Gastrocnemius medialis (tissue), 4 donors: ENCODE measurements at regions of chr6 and their contacts with region 1.

Region 1: DNA sequence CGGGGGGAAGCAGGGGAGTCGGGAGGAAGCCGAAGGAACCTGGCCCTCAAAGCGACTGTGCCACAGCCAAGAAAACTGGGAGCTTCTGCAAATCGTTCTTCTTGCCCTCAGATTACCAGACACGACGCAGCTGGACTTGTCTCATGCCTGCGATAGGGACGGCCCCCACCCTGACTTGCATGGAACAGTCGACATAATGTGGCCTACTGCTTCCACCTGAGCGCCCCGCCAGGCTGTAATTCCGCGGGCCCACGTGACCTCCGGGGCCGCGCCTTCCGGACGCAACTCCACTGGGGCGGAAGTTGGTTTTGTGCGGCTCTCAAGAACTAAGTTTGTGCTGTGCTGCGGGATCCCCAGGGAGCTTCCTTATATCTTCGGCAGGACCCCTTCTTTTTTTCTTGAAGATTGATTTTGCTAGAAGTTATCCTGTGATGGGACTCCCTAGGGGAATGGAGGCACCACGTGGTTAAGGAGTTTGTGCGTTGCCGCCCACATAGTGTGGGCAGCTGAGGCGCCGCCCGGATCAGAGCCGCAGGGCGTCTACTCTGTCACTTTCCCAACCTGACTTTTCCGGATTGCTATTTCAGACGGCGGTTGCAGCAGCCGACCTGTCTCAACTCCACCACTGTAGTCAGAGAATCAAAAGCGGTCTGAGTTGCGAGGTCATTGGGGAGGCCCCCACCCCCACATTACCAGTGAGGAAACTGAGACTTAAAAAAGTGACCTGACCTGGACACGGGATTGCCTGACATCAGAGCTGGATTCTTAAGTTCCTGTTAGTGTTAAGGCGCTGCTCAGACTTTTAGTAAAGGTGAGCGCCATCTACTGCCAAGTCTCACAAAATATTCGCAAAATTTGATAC is 540 bp upstream of the CD164 start:
- DNase-seq: peak; percentile 90 to 91
- ATAC-seq: peak; percentile 82 to 84
- H3K4me3 ChIP-seq: peak overlapping the region; percentile 87 to 100 (median 98)
- H3K27ac ChIP-seq: peak overlapping the region; percentile 96 to 100 (median 99)
- H3K4me1 ChIP-seq: peaks cover 42 to 43% of the 10 kb centered on the region in 2 donors
- H3K27me3 ChIP-seq: no peaks in the 10 kb centered on the region
- CTCF ChIP-seq: peak; percentile 51 to 64 (median 55)
- POLR2A ChIP-seq: peak; percentile 50 to 75

Region 2: GRCh38 chr6:109002051-109002697 is 380.6 kb before region 1 on chr6:
- in situ Hi-C with region 1: no loop called
- intact Hi-C with region 1: loop called (anchors 5 kb)
- DNase-seq: peak; percentile 58 to 75
- ATAC-seq: peak; percentile 93 to 96
- H3K4me3 ChIP-seq: peak overlapping the region in 3 of 4 donors; percentile 23 to 35 (median 33)
- H3K27ac ChIP-seq: peak overlapping the region; percentile 92 to 98 (median 95)
- H3K4me1 ChIP-seq: peaks cover 87 to 92% of the 10 kb centered on the region in 2 donors
- H3K27me3 ChIP-seq: no peaks in the 10 kb centered on the region
- CTCF ChIP-seq: no peak
- POLR2A ChIP-seq: peak in 1 of 2 donors; percentile 43

Region 3: DNA sequence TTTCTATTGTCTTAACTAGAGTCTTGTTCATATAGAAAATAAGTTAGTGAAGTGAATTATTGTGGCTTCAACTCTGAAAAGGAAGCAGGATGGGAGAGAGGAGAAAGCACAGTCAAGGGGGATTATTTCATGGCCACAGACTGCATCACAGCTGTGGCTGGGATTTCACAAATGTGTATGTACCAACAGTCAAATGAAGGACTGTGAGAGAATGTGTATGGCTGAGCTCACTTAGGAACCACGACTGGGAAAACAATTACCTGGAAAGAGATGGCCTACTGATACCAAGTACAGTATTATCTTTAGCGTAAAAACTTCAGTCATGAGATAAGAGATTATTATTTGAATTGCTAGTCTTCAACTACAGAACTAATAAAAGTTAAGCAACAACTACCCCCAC is 343.0 kb before region 1 on chr6:
- in situ Hi-C with region 1: no loop called
- intact Hi-C with region 1: no loop called
- DNase-seq: no peak
- ATAC-seq: peak; percentile 68 to 87
- H3K4me3 ChIP-seq: no peak overlapping the region
- H3K27ac ChIP-seq: peak overlapping the region in 3 of 4 donors; percentile 13 to 70 (median 68)
- H3K4me1 ChIP-seq: peaks cover 65 to 83% of the 10 kb centered on the region in 2 donors
- H3K27me3 ChIP-seq: no peaks in the 10 kb centered on the region
- CTCF ChIP-seq: no peak
- POLR2A ChIP-seq: no peak

Region 4: GRCh38 chr6:109187399-109188114 is 195.2 kb before region 1 on chr6:
- in situ Hi-C with region 1: loop called (anchors 5 to 10 kb)
- intact Hi-C with region 1: loop called (anchors 1 kb)
- DNase-seq: peak; percentile 22 to 25
- ATAC-seq: peak; percentile 58 to 68
- H3K4me3 ChIP-seq: no peak overlapping the region
- H3K27ac ChIP-seq: no peak overlapping the region
- H3K4me1 ChIP-seq: peaks cover 0 to 3% of the 10 kb centered on the region in 2 donors
- H3K27me3 ChIP-seq: no peaks in the 10 kb centered on the region
- CTCF ChIP-seq: peak; percentile 85 to 96 (median 94)
- POLR2A ChIP-seq: no peak

Region 5: DNA sequence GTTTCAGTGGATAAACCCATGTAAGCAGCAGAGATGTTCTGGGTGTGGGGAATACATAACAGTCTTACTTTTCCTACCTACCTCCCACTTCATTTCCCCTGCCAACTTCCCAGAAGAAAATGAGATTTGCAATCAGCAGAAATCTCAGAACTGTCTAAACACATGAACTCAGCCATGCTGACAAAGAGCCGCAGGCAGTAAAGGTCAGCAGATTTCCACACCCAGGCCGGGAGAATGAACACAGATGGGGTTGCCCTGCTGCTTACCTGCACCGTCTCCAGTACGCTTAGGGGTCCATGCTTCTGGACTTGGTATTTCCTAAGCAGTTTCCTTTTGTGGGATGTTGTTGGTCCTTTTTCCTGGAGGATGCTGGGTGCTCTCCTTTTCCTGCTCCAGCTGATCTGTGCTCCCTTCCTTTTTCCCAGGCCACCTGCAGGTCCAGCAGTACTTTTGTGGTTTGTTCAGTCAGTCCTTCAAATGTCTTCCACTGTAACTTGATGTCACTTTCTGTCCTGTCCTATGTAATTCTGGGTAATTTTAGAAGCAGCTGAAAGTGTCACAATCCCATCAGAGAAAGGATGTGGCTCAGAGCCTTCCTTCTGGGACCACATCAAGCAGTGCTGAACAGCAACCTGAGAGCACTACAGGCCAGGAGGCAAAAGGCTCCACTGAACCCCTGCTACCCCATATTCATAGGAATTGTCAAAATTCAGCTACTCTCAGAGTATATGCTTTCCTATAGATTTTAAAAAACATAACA is 158.5 kb before region 1 on chr6:
- in situ Hi-C with region 1: no loop called
- intact Hi-C with region 1: no loop called
- DNase-seq: peak in 1 of 2 donors; percentile 23
- ATAC-seq: peak; percentile 90 to 93
- H3K4me3 ChIP-seq: peak overlapping the region in 1 of 4 donors; percentile 14
- H3K27ac ChIP-seq: peak overlapping the region; percentile 69 to 87 (median 82)
- H3K4me1 ChIP-seq: peaks cover 26 to 36% of the 10 kb centered on the region in 2 donors
- H3K27me3 ChIP-seq: no peaks in the 10 kb centered on the region
- CTCF ChIP-seq: no peak
- POLR2A ChIP-seq: no peak

Region 6: DNA sequence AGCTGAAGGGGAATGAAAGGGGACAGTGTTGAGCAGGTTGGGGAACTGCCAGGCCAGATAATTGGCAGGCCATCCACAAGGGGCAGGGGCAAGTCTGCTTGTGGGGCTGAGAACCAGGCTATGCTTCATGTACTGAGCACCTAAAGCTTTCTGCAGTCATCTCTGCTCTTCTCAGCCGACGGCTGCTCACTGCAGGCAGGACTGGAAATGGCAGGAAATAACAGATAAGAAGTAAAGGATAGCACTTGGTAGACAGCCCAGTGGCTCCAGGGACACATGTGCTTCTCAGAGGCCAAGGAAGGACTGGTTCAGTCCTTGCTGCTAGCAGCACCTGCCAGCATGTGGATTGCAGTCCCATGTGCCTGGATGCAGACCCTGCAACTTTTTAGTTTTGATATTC is 90.4 kb before region 1 on chr6:
- in situ Hi-C with region 1: no loop called
- intact Hi-C with region 1: loop called (anchors 2 kb)
- DNase-seq: peak; percentile 67 to 70
- ATAC-seq: peak; percentile 83 to 87
- H3K4me3 ChIP-seq: no peak overlapping the region
- H3K27ac ChIP-seq: peak overlapping the region; percentile 74 to 82 (median 76)
- H3K4me1 ChIP-seq: peaks cover 20 to 34% of the 10 kb centered on the region in 2 donors
- H3K27me3 ChIP-seq: no peaks in the 10 kb centered on the region
- CTCF ChIP-seq: peak in 2 of 5 experiments; percentile 23 to 26
- POLR2A ChIP-seq: no peak

Region 7: DNA sequence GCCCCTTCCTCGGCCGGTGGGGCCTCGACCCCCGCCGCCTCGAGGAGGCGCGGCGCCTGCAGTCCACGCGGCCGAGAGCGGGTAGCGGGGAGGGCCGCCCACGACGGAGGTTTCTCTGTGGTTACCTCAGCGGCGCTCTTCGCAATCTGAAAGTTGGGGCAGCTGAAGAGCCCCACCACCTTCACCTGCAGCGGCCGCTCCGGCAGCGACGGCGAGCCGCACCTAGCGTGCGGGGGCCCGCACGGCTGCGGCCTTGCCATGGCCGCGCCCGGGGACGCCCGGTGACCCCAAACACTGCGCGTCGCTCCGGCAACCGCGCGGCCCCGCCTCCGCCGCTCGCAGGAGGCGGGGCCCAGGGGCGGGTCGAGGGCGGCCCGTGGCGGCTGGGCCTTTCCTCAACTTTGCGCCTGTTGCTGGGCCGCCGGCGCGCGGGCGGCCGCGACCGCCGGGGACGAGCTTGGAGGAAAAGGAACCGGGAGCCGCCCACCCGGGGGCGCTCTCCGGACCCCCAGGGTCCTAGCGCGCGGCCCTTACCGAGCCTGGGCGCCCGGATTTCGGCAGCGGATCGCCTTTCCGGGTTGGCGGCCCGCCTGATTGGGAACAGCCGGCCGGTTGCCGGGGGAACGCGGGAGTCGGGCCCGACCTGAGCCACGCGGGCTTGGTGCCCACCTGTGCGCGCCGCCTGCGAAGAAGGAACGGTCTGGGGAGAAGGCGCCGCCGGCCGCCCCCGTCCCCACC is 57.7 kb after region 1 on chr6 and contains the starts of genes PPIL6 and SMPD2:
- in situ Hi-C with region 1: no loop called
- intact Hi-C with region 1: loop called (anchors 1 kb)
- DNase-seq: peak; percentile 69 to 85
- ATAC-seq: peak; percentile 90 to 92
- H3K4me3 ChIP-seq: peak within 1 kb of the TSS; percentile 73 to 96 (median 87)
- H3K27ac ChIP-seq: peak within 1 kb of the TSS; percentile 74 to 89 (median 83)
- H3K4me1 ChIP-seq: peaks cover 10 to 15% of the 10 kb centered on the region in 2 donors
- H3K27me3 ChIP-seq: no peaks in the 10 kb centered on the region
- CTCF ChIP-seq: peak in 2 of 5 experiments; percentile 36 to 40
- POLR2A ChIP-seq: peak; percentile 36 to 62
- total RNA-seq, gene PPIL6: 0.64 to 2.9 (median 1.3) TPM
- total RNA-seq, gene SMPD2: 3.9 to 7.7 (median 5.9) TPM

Region 8: GRCh38 chr6:109690737-109691621 is 308.2 kb after region 1 on chr6 and contains the starts of genes AK9 and FIG4:
- in situ Hi-C with region 1: no loop called
- intact Hi-C with region 1: loop called (anchors 10 kb)
- DNase-seq: peak; percentile 88 to 90
- ATAC-seq: peak; percentile 95 to 96
- H3K4me3 ChIP-seq: peak within 1 kb of the TSS; percentile 88 to 99 (median 92)
- H3K27ac ChIP-seq: peak within 1 kb of the TSS; percentile 86 to 95 (median 91)
- H3K4me1 ChIP-seq: peaks cover 12 to 22% of the 10 kb centered on the region in 2 donors
- H3K27me3 ChIP-seq: no peaks in the 10 kb centered on the region
- CTCF ChIP-seq: peak in 1 of 5 experiments; percentile 9
- POLR2A ChIP-seq: peak; percentile 56 to 79
- total RNA-seq, gene AK9: 3.9 to 8.2 (median 7.1) TPM
- total RNA-seq, gene FIG4: 5.3 to 11.8 (median 9.1) TPM